ENCODE measurements at regions of chr20 and their contacts with region 1.

Region 1: DNA sequence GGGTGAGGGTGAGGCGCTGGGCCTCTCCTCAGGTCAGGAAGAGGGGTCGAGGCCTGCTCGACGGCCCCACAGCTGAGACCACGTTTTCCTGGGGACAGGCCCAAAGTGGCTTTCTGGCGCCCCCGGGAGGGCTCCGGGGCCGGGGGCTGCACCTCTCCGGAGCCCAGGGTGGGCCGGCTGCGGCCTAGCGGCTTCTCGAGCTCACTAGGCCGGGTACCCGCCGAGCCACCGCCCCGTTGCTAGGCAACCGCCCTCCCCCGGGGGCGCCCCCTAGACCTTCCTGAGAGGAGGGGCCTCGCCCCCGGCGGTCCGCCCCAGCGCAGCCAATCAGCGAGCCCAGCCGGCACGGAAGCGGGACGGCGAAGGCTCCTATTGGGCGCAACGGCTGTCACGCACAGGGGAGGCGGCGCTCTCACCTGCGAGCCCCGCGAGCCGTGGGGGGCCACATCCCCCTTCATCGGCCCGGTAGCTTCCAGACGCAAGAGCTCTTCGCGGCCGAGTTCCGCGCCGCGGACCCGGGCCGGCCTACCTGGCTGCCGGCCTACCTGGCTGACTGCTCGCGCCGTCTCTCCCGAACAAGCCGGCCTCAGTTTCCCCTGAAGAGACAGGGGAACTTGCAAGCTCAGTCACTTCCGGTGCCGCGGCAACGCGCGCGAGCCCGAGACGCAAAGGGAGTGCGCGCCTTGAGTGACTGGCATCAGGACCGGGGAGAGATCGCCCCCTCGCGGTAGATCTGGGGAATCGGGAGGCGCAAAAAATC is 831 bp upstream of the BCL2L1 start:
- ATAC-seq: peak; percentile 86 to 95 (median 92)
- H3K4me3 ChIP-seq: peak overlapping the region; percentile 48 to 92 (median 70)
- H3K27ac ChIP-seq: peak overlapping the region; percentile 97 to 99
- H3K4me1 ChIP-seq: peaks cover 26 to 32% of the 10 kb centered on the region in 2 donors

Region 2: GRCh38 chr20:31630187-31630790 is 93.2 kb before region 1 on chr20:
- in situ Hi-C with region 1: loop called in 1 of 9 experiments (anchors 10 kb)
- ATAC-seq: no peak
- H3K4me3 ChIP-seq: no peak overlapping the region
- H3K27ac ChIP-seq: no peak overlapping the region
- H3K4me1 ChIP-seq: no peaks in the 10 kb centered on the region

Region 3: DNA sequence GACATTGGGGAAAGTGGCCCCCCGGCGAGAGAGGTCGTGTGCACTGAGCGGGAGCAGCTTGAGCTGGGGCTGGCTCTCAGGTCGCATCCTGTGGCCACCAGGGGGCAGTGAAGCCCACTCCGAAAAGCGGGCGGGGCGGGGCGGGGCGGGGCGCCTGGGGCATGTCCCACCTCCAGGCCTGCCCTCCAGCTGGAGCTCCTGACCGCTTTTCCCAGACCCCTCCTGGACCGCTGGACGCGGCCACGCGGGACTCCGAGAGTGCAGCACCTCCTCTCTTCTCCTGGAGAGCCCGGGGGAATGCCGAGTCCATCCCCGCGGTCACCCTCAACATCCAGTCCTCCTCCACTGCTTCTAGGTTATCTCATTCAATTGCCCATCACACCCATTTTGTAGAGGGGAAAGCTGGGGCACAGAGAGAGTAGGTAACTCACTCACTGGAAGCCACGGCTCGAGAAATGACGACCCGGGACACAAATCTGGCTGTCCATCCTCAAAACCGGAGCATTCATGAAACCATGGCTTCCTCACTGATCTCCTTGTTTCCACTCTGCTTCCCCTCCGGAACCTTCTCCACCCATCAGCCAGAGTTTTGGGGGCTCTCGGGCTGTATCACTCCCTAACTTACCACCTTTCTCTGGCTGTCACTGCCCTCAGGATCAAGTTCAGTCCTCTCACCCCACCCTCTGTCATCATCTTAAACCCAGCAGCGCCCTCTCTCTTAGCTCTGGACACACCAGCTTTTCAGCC is 61.7 kb before region 1 on chr20:
- in situ Hi-C with region 1: loop called in 1 of 9 experiments (anchors 10 kb)
- ATAC-seq: peak; percentile 63 to 86 (median 74)
- H3K4me3 ChIP-seq: peak overlapping the region; percentile 10 to 27 (median 21)
- H3K27ac ChIP-seq: no peak overlapping the region
- H3K4me1 ChIP-seq: peaks cover 2 to 22% of the 10 kb centered on the region in 2 donors

Region 4: DNA sequence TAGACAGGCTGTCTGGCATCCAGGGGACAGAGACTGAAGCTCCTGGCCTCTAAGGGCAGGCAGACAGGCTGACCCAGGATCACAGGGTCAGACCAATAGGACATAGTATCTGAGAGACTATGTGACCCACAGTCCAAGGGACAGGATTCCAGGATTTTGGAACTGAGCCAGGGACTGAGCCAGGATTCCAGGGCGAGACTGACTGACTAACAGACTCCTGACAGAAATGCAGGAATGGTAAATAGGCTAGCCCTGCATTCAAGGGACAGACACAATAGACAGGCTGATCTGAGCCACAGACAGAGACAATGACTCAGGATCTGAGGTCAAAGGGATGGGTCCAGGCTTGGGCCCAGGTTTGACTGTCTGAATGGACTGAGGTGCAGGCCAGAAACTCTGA is 264.2 kb after region 1 on chr20:
- in situ Hi-C with region 1: no loop called
- ATAC-seq: peak in 3 of 8 experiments; percentile 34 to 99 (median 99)
- H3K4me3 ChIP-seq: no peak overlapping the region
- H3K27ac ChIP-seq: no peak overlapping the region
- H3K4me1 ChIP-seq: no peaks in the 10 kb centered on the region

Measured in motor neuron (in vitro differentiated cells).